ENCODE measurements at regions of chr16 and their contacts with region 1.

Region 1: DNA sequence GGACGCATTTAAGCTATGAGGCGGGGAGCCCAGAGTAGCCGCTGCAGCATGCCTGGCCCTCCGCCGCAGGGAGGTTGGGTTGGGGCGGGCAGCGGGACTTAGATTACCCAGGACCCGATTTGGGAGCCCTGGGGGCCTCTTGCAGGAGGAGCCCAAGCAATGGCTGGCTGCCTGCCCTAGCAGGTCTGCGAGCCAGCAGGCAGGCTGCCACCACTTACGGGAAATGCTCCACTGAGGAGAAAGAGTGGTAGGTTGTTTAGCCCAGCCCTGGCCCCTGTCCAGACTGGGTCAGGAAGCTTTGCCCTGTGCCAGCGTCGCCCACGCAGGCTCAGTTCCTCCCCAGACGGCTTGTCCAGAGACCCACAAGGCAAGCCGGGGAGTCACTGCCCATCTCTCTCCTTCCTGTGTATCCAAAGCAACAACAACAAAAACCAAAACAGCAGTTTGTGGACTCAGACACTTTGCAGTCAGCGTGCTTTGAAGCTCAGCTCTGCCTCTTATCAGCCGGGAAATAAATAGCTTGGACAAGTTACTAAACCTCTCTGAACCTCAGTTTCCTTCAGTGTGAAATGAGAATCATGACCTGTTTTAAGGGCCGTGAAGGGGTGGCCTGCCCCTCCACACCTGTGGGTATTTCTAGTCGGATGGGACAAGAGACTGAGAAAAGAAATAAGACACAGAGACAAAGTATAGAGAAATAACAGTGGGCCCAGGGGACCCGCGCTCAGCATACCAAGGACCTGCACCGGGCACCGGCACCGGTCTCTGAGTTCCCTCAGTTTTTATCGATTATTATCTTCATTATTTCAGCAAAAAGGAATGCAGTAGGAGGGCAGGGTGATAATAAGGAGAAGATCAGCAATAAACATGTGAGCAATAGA is 10.5 kb upstream of the TVP23A start:
- DNase-seq: peak; percentile 70
- H3K4me3 ChIP-seq: no peak overlapping the region
- CTCF ChIP-seq: no peak

Region 2: DNA sequence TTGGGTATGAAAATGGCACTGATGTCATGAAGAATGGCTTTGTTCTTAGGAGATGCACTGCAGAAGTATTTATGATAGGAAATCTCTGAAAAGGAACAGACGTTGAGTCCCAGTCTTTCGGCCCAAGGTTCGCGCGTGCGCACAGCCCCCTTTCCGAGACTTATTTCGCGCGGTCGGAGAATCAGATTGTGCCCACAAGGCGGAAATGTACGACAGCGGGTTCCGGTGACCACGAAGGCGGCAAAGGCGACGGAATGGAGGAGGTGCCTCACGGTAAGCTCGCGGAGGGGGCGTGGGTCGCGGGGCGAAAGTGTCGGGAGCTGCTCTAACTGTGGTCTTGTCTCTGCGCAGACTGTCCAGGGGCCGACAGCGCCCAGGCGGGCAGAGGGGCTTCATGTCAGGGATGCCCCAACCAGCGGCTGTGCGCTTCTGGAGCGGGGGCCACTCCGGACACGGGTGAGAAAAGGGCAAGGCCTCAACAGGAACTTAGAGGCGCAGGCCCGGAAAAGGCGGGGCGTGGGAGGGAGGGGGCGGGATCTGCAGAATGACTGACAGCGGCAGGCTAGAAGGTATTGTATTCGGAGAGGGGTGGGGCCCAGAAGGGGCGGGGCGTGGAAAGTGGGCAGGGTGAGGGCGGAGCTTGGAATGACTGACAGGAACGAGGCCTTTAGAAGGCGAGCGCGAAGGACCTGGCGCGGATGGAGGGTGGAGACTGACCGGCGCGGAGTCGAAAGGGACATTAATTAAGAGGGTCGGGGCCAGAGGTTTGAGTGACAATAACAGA is 85.3 kb before region 1 on chr16 and contains the start of gene NUBP1:
- in situ Hi-C with region 1: loop called (anchors 5 kb)
- DNase-seq: peak; percentile 95
- H3K4me3 ChIP-seq: peak within 1 kb of the TSS; percentile 58
- CTCF ChIP-seq: no peak

Region 3: DNA sequence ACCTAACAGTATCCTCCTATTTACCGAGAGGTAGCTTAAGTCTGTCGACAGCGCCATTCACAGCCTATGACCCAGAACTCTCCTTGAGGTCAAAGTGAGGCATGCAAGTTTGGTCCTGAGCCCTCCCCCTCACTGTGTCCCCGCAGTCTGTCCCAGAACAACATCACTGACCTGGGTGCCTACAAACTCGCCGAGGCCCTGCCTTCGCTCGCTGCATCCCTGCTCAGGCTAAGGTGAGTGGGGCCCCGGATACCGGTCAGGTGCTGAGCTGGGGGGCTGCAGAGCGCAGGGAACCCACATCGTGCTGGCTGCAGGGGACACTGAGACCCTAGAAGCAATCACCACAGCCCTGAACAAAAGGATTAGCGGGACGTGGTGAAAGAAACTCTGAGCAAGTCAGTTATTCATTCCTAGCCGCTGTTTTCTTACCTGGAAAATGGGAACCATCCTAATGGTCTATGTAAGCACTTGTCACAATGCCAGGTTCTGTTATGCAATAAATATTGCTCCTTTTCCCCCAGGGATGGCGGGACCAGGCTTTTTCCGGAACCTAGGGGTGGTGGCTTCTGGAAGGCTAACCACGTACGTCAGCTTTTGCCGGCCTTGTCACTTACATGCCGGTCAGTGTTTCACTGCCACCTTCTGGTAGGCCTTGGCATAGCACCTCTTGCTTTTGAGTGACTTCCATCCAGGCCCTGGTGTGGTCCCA is 89.4 kb after region 1 on chr16:
- in situ Hi-C with region 1: no loop called
- DNase-seq: peak; percentile 93
- H3K4me3 ChIP-seq: peak overlapping the region; percentile 5
- CTCF ChIP-seq: peak; percentile 100